MCF 10A (cell line): ENCODE measurements at regions of chr2 and their contacts with region 1.

Region 1: DNA sequence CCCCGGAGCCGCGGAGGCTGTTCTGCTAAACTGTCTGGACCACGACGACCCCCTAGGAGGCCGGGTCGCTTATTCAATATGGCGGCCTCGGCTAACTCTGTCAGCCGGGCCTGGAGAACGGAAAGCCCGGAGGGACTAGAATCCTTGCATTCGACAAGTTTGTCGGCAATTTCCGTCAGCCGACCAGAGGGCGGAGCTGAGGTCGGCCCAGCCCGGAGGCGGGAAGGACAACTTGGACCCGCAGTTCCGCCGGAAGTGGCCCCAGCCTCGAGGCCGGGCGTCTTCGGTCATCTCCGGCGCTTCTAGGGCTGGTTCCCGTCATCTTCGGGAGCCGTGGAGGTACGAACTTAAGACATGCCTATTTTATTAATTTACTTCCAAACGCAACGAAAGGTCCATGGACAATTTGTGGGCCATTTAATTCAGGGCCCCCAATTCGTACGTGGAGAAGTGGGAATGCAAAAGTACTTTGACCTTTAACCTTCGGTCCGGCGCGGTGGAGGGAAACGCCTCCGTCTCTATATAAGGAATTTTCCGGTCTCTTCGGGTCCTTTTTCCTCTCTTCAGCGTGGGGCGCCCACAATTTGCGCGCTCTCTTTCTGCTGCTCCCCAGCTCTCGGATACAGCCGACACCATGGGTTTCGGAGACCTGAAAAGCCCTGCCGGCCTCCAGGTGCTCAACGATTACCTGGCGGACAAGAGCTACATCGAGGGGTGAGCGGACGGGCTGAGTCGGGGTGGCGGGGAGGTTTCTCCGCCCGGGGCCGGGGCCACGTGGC is at the starts of genes EEF1B2 and NDUFS1:
- DNase-seq: peak; percentile 98
- H3K4me3 Mint-ChIP-seq: peak within 1 kb of the TSS; percentile 80
- H3K27ac Mint-ChIP-seq: peak within 1 kb of the TSS; percentile 98
- H3K4me1 Mint-ChIP-seq: peaks cover 22% of the 10 kb centered on the region
- H3K27me3 Mint-ChIP-seq: no peaks in the 10 kb centered on the region
- CTCF ChIP-seq: no peak
- total RNA-seq, gene EEF1B2: 1,045 and 1,110 TPM in 2 replicates
- total RNA-seq, gene NDUFS1: 91.9 and 100 TPM in 2 replicates

Region 2: DNA sequence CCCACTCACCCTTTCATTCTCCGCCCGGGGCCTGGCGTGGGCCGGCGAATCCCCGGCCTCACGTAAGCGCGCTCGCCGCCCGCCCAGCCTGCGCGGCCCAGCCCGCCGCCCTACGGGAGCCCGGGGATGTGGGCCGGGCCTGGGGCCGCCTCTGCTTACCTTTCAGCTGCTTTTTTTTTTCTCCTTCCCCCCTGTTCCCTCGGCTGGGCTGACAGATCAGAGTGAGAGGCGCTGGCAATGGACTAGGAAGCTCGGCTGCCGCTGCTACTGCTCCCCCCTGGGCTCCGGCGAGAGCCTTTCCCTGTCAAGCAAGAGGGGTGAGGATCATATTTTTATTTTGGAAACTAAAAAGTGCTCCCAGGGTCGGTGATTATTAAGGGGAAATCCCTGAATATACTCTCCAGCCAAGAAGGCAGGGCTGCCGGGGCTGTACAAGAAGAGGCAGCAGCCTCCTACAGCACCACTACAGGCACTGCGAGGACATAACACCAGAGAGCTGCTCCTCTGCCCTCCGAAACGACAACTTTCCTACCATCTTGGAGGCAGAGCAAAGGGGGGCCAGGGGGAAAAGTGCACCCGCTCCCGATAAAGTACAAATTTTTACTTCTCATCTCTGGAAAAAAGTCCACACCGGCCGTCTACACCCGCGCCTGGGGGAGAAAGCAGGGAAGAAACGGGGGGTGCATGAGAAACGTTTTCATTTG is 73.6 kb before region 1 on chr2 and contains the start of gene INO80D:
- CTCF ChIA-PET with region 1: no interaction called
- POLR2A ChIA-PET with region 1: interaction called, 17 read pairs
- intact Hi-C with region 1: loop called (anchors 1 kb)
- DNase-seq: peak; percentile 86
- H3K4me3 Mint-ChIP-seq: peak within 1 kb of the TSS; percentile 94
- H3K27ac Mint-ChIP-seq: peak within 1 kb of the TSS; percentile 97
- H3K4me1 Mint-ChIP-seq: peaks cover 11% of the 10 kb centered on the region
- H3K27me3 Mint-ChIP-seq: no peaks in the 10 kb centered on the region
- CTCF ChIP-seq: peak; percentile 26
- total RNA-seq, gene INO80D: 18.7 and 21.6 TPM in 2 replicates

Region 3: DNA sequence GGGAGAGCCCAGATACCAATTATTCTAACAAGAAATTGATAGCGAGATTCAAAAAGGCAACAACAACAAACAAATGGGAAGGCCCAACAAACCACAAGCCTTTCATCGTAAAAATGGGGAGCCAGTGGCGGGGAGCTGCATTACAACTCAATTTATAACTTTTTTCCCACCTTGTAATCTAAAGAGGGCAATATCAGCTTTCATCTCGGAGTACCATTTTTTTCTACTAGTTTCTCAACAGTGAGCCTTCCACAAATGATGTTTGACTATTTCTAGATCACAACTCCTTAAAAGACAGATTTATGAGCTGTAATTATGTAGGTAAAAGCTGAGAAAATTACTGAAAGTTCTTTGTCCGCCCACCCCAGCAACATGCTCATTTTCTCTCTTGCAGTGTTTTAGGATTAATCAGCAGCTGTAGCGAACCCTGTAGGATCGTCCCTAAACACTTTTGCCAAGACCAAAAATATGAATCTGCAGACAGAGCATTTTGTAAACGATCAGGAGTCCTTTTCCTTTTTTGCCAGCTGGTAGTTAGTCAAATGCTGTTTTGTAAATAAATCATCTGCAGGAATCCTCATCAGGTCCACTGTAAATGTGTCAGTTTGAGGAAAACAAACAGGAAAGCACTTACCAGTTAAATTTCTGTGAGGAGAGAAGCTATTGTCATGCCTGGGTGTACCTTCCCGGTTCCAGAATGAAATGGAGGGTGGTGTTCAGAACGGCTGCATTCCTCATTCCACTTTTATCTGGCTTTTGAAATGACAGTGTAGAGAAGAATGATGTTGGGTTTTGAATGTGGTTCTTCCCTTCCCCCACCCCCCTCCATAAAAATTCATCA is 53.4 kb after region 1 on chr2:
- CTCF ChIA-PET with region 1: interaction called, 14 read pairs
- POLR2A ChIA-PET with region 1: interaction called, 55 read pairs
- intact Hi-C with region 1: loop called (anchors 1 kb)
- DNase-seq: peak; percentile 23
- H3K4me3 Mint-ChIP-seq: peak overlapping the region; percentile 81
- H3K27ac Mint-ChIP-seq: peak overlapping the region; percentile 95
- H3K4me1 Mint-ChIP-seq: peaks cover 23% of the 10 kb centered on the region
- H3K27me3 Mint-ChIP-seq: no peaks in the 10 kb centered on the region
- CTCF ChIP-seq: peak; percentile 17

Region 4: DNA sequence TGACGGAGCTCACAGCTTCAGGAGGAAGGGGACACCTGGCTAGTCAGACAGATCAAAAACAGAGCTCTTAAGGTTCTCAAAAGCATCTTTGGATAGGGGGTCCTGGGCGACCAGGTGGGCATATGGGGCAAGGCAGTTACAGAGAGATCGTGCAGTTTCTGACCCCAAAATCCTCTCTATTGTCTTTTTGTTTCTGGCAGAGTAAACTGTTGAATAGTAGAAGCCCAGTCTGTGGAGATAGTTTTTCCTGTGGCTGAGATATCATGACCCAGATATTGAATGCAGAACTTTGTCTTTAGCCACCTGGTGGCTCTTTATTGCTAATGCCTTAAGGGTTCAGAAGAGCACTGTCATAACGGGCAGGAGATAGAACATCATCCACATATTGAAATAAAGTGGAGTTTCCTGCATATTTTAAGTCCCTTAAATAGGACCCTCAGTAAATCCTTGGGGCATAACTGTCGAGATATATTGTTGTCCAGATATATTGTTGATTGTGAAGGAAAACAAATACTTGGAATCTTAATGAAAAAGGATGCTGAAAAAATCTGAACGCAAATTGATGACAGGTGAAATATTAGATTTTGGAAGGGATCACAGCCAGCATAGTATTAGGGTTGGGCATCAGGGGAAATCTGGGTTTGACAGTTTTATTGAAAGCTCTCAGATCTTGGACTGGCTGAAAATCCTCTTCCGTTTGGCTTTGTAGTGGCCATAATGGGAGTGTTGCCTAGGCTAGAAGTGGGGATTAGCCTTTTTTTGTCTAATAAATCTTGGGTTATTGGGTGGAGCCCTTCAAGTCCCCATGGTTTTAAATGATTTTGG is 100.9 kb after region 1 on chr2:
- CTCF ChIA-PET with region 1: interaction called, 50 read pairs
- POLR2A ChIA-PET with region 1: interaction called, 8 read pairs
- intact Hi-C with region 1: loop called (anchors 1 kb)
- DNase-seq: peak; percentile 44
- H3K4me3 Mint-ChIP-seq: no peak overlapping the region
- H3K27ac Mint-ChIP-seq: peak overlapping the region; percentile 65
- H3K4me1 Mint-ChIP-seq: peaks cover 15% of the 10 kb centered on the region
- H3K27me3 Mint-ChIP-seq: peaks cover 11% of the 10 kb centered on the region
- CTCF ChIP-seq: peak; percentile 45

Region 5: GRCh38 chr2:206442833-206443734 is 283.5 kb after region 1 on chr2 and contains the start of gene ADAM23:
- CTCF ChIA-PET with region 1: no interaction called
- POLR2A ChIA-PET with region 1: no interaction called
- intact Hi-C with region 1: loop called (anchors 10 kb)
- DNase-seq: no peak
- H3K4me3 Mint-ChIP-seq: peak within 1 kb of the TSS; percentile 66
- H3K27ac Mint-ChIP-seq: no peak within 1 kb of the TSS
- H3K4me1 Mint-ChIP-seq: peaks cover 7% of the 10 kb centered on the region
- H3K27me3 Mint-ChIP-seq: peaks cover 50% of the 10 kb centered on the region
- CTCF ChIP-seq: no peak
- total RNA-seq, gene ADAM23: 0.12 TPM in 1 of 2 replicates, not detected in the other